IMR-90 (cell line): ENCODE measurements at regions of chr11 and their contacts with region 1.

Region 1: GRCh38 chr11:75022759-75023396 is 34.1 kb downstream of the NEU3 start:
- DNase-seq: peak; percentile 84
- ATAC-seq: peak; percentile 99
- H3K4me3 ChIP-seq: no peak overlapping the region
- H3K27ac ChIP-seq: no peak overlapping the region
- H3K4me1 ChIP-seq: no peaks in the 10 kb centered on the region
- H3K27me3 ChIP-seq: peaks cover 3% of the 10 kb centered on the region
- CTCF ChIP-seq: peak; percentile 99
- POLR2A ChIP-seq: no peak
- RAD21 ChIP-seq: peak; percentile 98

Region 2: DNA sequence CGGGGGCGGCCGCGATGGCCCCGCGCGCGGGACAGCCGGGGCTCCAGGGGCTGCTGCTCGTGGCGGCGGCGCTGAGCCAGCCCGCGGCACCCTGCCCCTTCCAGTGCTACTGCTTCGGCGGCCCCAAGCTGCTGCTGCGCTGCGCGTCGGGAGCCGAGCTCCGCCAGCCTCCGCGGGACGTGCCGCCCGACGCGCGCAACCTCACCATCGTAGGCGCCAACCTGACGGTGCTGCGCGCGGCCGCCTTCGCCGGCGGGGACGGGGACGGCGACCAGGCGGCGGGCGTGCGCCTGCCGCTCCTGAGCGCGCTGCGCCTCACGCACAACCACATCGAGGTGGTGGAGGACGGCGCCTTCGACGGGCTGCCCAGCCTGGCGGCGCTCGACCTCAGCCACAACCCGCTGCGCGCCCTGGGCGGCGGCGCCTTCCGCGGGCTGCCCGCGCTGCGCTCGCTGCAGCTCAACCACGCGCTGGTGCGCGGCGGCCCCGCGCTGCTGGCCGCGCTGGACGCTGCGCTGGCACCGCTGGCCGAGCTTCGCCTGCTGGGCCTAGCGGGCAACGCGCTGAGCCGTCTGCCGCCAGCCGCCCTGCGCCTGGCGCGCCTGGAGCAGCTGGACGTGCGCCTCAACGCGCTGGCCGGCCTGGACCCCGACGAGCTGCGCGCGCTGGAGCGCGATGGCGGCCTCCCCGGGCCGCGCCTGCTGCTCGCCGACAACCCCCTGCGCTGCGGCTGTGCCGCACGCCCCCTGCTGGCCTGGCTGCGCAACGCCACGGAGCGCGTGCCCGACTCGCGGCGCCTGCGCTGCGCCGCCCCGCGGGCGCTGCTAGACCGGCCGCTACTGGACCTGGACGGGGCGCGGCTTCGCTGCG is 218.4 kb after region 1 on chr11:
- CTCF ChIA-PET with region 1: interaction called, 10 read pairs
- POLR2A ChIA-PET with region 1: no interaction called
- dilution Hi-C with region 1: no loop called
- in situ Hi-C with region 1: loop called (anchors 5 kb)
- intact Hi-C with region 1: loop called (anchors 2 kb)
- DNase-seq: peak; percentile 80
- ATAC-seq: peak; percentile 99
- H3K4me3 ChIP-seq: peak overlapping the region; percentile 51
- H3K27ac ChIP-seq: no peak overlapping the region
- H3K4me1 ChIP-seq: no peaks in the 10 kb centered on the region
- H3K27me3 ChIP-seq: peaks cover 88% of the 10 kb centered on the region
- CTCF ChIP-seq: peak; percentile 99
- POLR2A ChIP-seq: no peak
- RAD21 ChIP-seq: peak; percentile 66